ENCODE measurements at regions of chr5 and their contacts with region 1.

Region 1: GRCh38 chr5:11504892-11505545 is 399.2 kb downstream of the CTNND2 start:
- DNase-seq: no peak
- H3K4me3 ChIP-seq: no peak overlapping the region
- H3K27ac ChIP-seq: no peak overlapping the region
- H3K4me1 ChIP-seq: no peaks in the 10 kb centered on the region
- H3K27me3 ChIP-seq: no peaks in the 10 kb centered on the region
- CTCF ChIP-seq: no peak
- EP300 ChIP-seq: no peak
- POLR2A ChIP-seq: no peak

Region 2: DNA sequence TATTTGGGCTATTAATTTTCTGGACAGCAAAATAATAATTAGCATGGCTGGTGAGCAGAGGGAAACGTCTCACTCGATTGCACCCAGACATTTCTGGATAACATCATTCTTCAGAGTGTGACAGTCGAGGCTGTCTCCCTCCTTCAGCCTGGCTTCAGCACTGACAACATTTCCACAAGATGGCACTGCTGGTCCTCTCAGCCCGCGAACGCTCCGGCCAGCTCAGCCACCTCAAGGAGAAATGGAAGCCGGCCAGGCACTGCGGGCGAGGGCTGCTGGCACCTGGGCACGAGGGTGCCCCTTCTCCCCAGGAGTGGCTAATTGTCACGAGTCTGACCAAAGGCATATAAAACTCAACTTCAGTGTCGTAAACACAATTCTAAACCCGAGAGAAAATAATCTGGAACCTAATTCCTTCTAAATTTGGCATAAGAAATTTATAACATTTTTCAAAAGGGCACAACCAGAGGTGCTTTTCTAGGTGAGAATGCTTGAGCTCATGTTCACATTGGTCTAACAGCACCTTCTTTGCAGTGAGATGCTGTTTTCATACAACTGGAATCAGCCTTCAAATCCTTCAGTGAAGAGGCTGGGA is 809.9 kb before region 1 on chr5:
- intact Hi-C with region 1: loop called in 1 of 4 experiments (anchors 10 kb)
- DNase-seq: peak; percentile 60 to 76 (median 74)
- H3K4me3 ChIP-seq: no peak overlapping the region
- H3K27ac ChIP-seq: no peak overlapping the region
- H3K4me1 ChIP-seq: no peaks in the 10 kb centered on the region
- H3K27me3 ChIP-seq: no peaks in the 10 kb centered on the region
- CTCF ChIP-seq: peak; percentile 48 to 56 (median 53)
- EP300 ChIP-seq: no peak
- POLR2A ChIP-seq: no peak

Region 3: DNA sequence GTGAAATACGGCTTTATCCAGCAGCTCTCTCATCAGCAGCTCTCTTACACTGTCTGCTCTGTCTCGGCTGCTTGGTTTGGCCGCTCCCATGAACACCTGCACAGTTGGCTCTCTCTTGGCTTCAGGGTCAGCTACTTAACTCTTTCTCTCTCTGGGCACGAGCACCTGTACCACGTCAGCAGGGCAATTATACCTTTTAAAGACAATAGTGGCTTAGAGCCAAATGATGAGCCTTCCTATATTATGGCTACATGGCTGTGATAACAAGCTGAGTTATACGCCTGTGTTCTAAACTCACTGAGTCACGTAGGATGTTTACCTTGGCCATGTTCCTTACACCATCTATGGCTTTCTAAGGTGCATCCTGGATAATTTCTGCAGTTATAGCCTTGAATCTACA is 468.4 kb after region 1 on chr5:
- intact Hi-C with region 1: no loop called
- DNase-seq: no peak
- H3K4me3 ChIP-seq: no peak overlapping the region
- H3K27ac ChIP-seq: no peak overlapping the region
- H3K4me1 ChIP-seq: no peaks in the 10 kb centered on the region
- H3K27me3 ChIP-seq: no peaks in the 10 kb centered on the region
- CTCF ChIP-seq: no peak
- EP300 ChIP-seq: no peak
- POLR2A ChIP-seq: no peak

Region 4: GRCh38 chr5:12016159-12016746 is 511.2 kb after region 1 on chr5:
- intact Hi-C with region 1: no loop called
- DNase-seq: no peak
- H3K4me3 ChIP-seq: no peak overlapping the region
- H3K27ac ChIP-seq: no peak overlapping the region
- H3K4me1 ChIP-seq: no peaks in the 10 kb centered on the region
- H3K27me3 ChIP-seq: no peaks in the 10 kb centered on the region
- CTCF ChIP-seq: no peak
- EP300 ChIP-seq: no peak
- POLR2A ChIP-seq: no peak